Transverse colon (tissue), 4 donors: ENCODE measurements at regions of chr4 and their contacts with region 1.

Region 1: DNA sequence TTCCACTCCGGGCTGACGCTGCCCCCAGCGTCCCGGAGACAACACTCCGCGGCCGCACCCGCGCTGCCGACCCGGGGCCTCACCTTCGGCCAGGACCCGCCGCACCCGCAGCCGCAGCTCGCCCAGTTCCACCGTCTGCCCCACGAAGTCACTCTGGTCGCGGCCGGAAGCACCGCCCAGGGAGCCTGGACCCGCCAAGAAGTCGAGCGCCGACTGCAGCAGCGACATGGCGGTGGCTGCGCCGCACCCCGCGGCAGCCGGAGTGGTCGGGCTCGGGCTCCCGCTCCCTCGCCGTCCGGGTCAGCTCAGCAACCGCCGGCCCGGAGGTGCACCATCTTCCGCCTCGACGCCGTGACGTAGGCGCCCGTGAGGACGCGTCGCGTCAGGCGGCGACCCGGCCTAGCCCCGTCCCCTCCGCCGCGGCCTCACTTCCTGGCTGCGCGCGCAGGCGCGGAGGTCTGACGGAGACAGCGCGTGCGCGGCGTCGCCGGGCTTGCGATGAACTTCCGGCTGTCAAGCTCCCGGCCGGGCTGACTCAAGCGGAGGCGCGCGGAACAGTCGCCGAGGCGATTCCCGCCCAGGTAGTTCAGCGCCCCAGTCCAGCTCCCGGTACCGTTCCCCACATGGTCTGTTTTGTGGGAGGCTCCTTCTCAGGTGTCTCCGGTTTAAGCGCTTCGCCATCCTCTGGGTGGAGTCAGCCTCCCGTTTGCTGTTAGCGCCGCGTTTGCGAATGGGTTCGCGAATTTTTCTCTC is at the starts of genes GAK and TMEM175:
- DNase-seq: peak; percentile 98
- H3K4me3 ChIP-seq: peak within 1 kb of the TSS; percentile 56 to 99 (median 77)
- H3K27ac ChIP-seq: peak within 1 kb of the TSS; percentile 91 to 95 (median 92)
- H3K4me1 ChIP-seq: peaks cover 17 to 49% (median 31%) of the 10 kb centered on the region in 4 donors
- H3K27me3 ChIP-seq: no peaks in the 10 kb centered on the region
- CTCF ChIP-seq: peak in 2 of 5 experiments; percentile 19 to 40
- EP300 ChIP-seq: no peak
- POLR2A ChIP-seq: peak; percentile 97
- total RNA-seq, gene GAK: 230 to 882 (median 305) TPM
- total RNA-seq, gene TMEM175: 44.0 to 116 (median 50.5) TPM

Region 2: DNA sequence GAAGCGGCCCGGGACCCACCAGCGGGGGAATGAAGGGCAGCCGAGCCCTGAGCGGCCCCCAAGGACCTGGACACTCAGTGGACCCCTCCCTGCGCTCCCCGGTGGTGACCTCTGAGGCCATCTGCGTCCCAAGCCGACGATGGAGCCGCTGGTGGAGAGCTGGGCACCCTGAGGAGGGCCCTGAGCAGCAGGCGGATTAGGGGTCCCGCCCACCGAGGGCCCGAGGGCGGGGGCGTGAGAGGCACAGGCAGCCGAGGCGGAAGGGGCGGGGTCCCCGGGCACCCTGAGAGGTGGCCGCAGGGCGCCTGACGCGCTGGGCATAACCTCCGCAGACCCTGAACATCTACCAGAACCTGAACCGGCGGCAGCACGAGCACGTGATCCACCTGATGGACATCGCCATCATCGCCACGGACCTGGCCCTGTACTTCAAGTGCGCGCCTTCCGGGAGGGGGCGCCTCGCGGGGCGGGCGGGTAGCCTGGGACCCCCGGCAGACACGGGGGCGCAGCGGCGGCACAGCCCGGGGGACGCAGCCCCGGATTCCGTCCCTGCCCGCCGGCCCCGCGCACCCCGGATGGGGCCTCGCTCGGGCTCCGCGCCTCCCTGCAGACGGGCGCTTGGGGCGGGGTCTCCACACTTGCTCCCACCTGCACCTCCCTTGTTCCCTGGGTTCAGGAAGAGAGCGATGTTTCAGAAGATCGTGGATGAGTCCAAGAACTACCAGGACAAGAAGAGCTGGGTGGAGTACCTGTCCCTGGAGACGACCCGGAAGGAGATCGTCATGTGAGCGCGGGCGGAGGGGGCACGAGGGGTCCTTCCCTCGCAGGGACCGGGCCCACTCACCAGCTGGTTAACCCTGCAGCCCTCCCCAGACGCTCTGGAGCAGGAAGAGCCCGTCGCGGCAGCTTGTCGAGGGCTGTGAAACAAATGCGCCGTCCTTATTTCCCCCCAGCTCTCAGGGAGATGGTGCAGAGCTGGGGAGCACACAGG is 268.4 kb before region 1 on chr4:
- in situ Hi-C with region 1: no loop called
- intact Hi-C with region 1: no loop called
- DNase-seq: peak; percentile 71
- H3K4me3 ChIP-seq: peak overlapping the region; percentile 34 to 55 (median 47)
- H3K27ac ChIP-seq: peak overlapping the region; percentile 12 to 44 (median 32)
- H3K4me1 ChIP-seq: peaks cover 0 to 10% (median 6%) of the 10 kb centered on the region in 4 donors
- H3K27me3 ChIP-seq: peaks cover 6% of the 10 kb centered on the region
- CTCF ChIP-seq: no peak
- EP300 ChIP-seq: no peak
- POLR2A ChIP-seq: no peak

Region 3: DNA sequence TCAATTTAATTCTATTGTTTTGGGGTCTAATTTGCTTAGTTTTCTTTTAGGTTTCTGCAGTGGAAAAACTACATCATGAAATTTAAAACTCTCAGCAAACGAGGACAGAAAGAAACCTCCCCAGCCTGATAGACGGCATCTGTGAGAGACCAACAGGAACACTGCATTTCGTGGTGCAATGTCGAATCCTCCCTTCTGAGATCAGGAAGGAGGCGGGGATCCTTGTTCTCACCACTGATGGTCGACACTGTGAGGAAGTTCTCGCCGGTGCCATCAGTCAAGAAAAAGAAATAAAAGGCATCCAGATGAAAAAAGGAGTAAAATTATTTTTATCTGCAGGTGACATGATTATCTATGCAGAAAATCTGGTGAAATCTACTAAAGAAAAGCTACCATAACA is 16.5 kb before region 1 on chr4:
- in situ Hi-C with region 1: no loop called
- intact Hi-C with region 1: no loop called
- DNase-seq: no peak
- H3K4me3 ChIP-seq: peak overlapping the region in 1 of 4 donors; percentile 20
- H3K27ac ChIP-seq: no peak overlapping the region
- H3K4me1 ChIP-seq: peaks cover 0 to 30% (median 10%) of the 10 kb centered on the region in 4 donors
- H3K27me3 ChIP-seq: no peaks in the 10 kb centered on the region
- CTCF ChIP-seq: no peak
- EP300 ChIP-seq: no peak
- POLR2A ChIP-seq: no peak

Region 4: DNA sequence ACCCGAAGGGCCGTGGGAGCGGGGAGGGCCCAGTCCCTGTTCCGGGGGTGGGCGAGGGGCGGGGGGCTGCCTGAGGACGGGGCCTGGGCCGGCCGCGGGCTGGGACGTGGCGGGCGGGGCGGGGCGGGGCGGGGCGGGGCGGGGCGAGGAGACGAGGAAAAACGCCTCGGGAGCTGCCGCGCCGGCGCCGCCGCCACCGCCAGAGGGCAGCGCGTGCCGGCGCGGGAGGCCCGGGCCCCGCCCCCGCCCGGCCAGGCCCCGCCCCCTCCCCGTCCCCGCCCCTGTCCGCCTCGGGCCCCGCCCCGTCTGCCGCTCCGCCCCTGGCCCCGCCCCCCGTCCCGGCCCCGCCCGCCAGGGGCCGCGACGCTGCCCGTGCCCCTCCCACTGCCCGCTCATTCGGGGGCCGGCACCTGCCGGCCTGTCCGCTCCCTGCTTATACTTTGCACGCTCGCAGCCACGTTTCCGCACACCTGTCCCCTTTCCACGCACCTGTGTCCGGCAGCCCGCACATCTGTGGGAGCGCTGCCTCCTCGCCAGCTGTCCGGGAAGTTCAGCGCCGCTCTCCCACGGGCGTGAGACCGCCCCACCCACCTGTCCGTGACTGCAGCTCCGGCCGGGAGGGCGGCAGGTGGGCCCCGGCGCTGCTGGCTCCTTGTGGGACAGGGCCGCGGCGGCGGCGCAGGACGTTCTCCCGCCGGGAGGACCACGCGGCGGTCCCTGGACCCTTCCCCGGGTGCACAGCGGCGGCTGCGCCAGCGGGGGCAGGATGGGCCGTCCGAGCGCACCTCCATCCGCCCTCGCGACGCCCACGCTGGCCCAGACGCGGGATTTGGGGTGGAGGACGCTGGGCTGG is 77.6 kb after region 1 on chr4:
- in situ Hi-C with region 1: no loop called
- intact Hi-C with region 1: loop called (anchors 2 kb)
- DNase-seq: peak; percentile 84
- H3K4me3 ChIP-seq: peak overlapping the region; percentile 66 to 86 (median 70)
- H3K27ac ChIP-seq: peak overlapping the region; percentile 80 to 84 (median 82)
- H3K4me1 ChIP-seq: peaks cover 20 to 33% (median 27%) of the 10 kb centered on the region in 4 donors
- H3K27me3 ChIP-seq: peaks cover 38% of the 10 kb centered on the region
- CTCF ChIP-seq: peak in 2 of 5 experiments; percentile 2 to 59
- EP300 ChIP-seq: no peak
- POLR2A ChIP-seq: peak; percentile 31

Region 5: DNA sequence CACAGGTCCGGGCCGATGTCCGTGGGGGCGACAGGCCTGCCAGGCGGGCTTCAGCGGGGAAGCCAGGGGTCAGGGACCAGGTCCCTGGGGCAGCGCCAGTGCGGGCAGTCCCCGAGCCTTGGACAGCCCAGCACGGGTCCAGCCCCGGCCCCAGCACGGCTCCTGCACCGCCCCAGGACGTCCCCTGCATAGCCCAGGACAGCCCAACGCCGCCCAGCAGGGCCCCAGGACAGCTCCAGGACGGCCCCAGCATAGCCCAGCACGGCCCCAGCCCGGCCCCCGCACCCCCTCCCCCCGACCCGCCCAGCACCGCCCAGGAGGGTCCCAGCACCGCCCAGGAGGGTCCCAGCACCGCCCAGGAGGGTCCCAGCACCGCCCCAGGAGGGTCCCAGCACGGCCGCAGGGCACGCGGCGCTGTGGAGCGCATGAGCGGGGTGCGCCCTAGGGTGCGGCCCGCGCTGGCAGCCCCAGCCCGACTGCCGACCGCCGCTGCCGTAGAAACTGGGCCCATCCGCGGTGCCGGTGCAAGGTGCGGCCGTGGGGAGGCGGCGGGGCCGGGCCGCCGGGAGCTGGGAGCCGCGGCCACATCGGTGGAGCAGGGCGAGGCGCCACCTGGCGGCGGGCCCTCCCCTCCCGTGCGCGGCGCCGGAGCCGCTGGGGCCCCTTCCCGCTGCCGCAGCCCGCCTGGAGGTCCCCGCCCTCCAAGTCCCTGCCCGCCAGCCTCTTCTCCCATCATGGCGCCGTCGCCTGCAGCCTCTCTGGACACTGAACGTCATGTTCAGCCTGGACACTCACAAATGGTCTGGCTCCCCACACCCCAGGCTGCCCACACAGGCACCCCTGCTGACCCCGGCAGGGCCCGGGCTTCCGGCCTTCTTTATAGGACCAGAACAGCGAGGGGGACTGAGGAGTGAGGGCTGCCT is 580.9 kb after region 1 on chr4:
- in situ Hi-C with region 1: no loop called
- intact Hi-C with region 1: no loop called
- DNase-seq: peak; percentile 25
- H3K4me3 ChIP-seq: peak overlapping the region in 2 of 4 donors; percentile 18 to 21
- H3K27ac ChIP-seq: no peak overlapping the region
- H3K4me1 ChIP-seq: peaks cover 0 to 9% (median 0%) of the 10 kb centered on the region in 4 donors
- H3K27me3 ChIP-seq: peaks cover 64% of the 10 kb centered on the region
- CTCF ChIP-seq: peak in 4 of 5 experiments; percentile 38 to 55 (median 49)
- EP300 ChIP-seq: no peak
- POLR2A ChIP-seq: no peak